Mammary epithelial cell (primary cell): ENCODE measurements at regions of chr6 and their contacts with region 1.

Region 1: DNA sequence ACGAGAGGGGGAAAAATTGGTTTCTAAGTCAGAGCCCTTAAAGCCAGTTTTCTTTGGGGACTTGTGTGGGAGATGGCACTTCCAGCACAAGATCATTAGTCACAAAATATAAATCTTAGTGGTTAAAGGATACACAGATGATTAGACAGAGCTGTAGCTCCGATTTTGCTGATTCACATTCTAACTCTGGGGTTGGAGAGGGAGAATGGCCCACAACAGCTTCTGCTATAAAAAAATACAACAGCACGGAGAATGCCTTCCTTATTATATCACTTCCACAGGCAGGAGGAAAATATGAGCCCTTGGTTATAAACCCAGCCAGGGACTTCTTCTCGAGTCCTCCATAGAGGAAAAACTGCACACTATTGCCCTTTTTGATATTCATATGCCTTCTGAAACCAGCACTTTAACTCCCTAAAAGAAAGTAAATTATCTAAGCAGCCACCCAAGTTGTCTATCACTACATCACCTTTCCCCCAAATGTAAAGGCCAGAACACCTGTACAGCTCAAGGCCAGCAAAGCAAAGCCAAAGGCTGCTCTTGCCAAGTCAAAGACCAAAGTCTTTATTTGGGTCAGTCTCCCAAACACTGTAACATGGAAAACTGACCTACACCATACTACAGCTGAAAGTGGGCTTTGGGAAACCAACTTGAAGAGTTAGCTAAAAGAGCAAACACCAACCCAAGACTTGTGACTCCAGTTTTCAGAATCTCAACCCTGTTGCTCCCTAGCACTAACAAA is 10.4 kb downstream of the MRPL14 start:
- DNase-seq: peak; percentile 74
- H3K4me3 ChIP-seq: no peak overlapping the region
- H3K27ac ChIP-seq: peak overlapping the region; percentile 86
- H3K4me1 ChIP-seq: peaks cover 53% of the 10 kb centered on the region
- H3K27me3 ChIP-seq: no peaks in the 10 kb centered on the region
- CTCF ChIP-seq: no peak

Region 2: GRCh38 chr6:43972913-43973300 is 143.9 kb before region 1 on chr6:
- CTCF ChIA-PET with region 1: no interaction called
- dilution Hi-C with region 1: no loop called
- in situ Hi-C with region 1: no loop called
- intact Hi-C with region 1: no loop called
- DNase-seq: peak; percentile 40
- H3K4me3 ChIP-seq: no peak overlapping the region
- H3K27ac ChIP-seq: no peak overlapping the region
- H3K4me1 ChIP-seq: peaks cover 24% of the 10 kb centered on the region
- H3K27me3 ChIP-seq: no peaks in the 10 kb centered on the region
- CTCF ChIP-seq: no peak

Region 3: DNA sequence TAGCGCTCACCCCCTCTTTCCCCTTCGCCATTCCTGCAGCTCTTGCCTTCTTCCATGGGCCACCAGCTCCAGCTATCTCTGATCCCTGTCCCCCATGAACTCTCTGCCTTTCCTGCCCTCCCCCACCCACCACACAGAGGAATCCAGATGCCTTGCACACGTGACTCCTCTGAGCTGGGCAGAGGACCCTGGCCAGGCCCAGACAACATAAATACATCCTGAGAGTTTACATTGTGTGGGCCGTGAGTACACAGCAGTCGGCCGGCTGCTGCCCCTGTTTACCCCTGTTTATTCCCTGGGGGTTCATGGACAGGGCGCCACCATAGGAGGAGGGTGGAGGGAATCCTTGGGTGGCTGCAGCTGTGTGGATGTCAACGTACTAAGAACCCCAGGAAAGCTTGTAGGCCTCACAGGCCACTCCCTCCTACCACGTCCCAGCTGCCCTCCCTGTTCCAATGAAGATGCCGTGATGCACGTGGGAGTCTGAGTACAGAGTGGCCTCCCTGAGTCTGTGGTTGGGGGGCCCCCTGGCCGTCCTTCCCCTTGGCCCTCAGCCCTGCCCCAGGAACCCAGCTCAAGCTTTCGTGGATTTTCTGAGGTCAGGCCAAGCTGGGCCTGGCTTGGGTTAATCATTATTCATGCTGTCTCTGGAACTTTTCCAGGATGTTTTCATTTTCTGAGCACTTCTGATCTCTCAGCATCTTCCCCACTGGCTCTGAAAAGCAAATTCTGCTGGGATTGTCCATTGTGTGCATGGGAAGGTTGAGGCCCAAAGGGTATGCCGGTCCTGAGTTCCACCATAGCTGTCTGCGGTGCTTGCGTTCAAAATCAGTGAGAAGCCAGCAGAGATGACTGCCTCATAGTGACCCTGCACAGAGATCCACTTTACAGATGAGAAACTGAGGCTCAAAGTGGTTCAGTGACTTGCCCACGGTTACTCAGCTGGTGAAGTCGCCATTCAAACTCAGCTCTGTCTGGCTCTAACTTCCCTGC is 125.9 kb before region 1 on chr6:
- CTCF ChIA-PET with region 1: no interaction called
- dilution Hi-C with region 1: no loop called
- in situ Hi-C with region 1: no loop called
- intact Hi-C with region 1: no loop called
- DNase-seq: no peak
- H3K4me3 ChIP-seq: no peak overlapping the region
- H3K27ac ChIP-seq: no peak overlapping the region
- H3K4me1 ChIP-seq: peaks cover 12% of the 10 kb centered on the region
- H3K27me3 ChIP-seq: no peaks in the 10 kb centered on the region
- CTCF ChIP-seq: no peak

Region 4: DNA sequence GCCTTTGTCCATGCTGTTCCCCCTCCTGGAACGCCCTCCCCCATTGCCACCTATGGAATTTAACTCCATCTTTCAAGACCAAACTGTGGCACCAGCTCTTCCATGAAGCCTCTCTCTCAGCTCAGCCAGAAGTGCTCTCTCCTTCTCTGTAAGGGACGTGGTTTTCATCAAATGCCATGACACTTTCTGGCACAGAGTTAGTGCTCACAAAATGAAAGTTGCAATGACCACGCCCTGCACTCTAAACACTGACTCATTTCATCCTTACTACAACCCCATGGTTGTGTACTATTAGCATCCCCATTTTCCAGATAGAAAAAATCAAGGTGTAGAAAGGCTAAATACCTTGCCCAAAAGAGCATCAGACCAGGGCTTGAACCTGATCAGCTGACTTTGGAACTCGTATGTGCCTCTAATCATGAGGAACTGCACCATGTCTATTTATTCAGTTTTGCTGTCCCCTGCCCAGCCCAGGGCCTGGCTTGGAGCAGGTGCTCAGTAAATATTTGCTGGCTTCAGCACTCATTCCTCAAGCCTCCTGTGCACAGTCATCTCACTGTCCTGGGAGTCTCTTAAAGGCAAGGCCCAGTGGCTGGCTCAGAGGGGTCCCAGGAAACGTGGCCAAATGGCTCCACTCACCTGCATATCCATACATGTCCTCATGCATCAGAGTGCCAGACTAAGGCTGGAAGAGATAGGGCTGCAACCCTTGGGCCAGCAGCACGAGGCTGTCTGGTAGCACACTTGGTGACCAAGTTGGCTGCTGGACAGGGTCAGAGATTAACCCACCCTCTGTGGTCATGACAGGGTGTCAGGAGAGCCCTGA is 67.4 kb before region 1 on chr6:
- CTCF ChIA-PET with region 1: no interaction called
- dilution Hi-C with region 1: loop called (anchors 5 kb)
- in situ Hi-C with region 1: no loop called
- intact Hi-C with region 1: no loop called
- DNase-seq: peak; percentile 70
- H3K4me3 ChIP-seq: no peak overlapping the region
- H3K27ac ChIP-seq: no peak overlapping the region
- H3K4me1 ChIP-seq: peaks cover 67% of the 10 kb centered on the region
- H3K27me3 ChIP-seq: no peaks in the 10 kb centered on the region
- CTCF ChIP-seq: no peak

Region 5: GRCh38 chr6:44127186-44128019 is 10.6 kb after region 1 on chr6 and contains the starts of genes MRPL14 and TMEM63B:
- CTCF ChIA-PET with region 1: no interaction called
- dilution Hi-C with region 1: no loop called
- in situ Hi-C with region 1: no loop called
- intact Hi-C with region 1: loop called (anchors 1 kb)
- DNase-seq: peak; percentile 84
- H3K4me3 ChIP-seq: peak within 1 kb of the TSS; percentile 81 to 89 (median 88)
- H3K27ac ChIP-seq: peak within 1 kb of the TSS; percentile 63
- H3K4me1 ChIP-seq: peaks cover 37% of the 10 kb centered on the region
- H3K27me3 ChIP-seq: no peaks in the 10 kb centered on the region
- CTCF ChIP-seq: no peak
- total RNA-seq, gene MRPL14: 57.2 to 82.0 TPM
- total RNA-seq, gene TMEM63B: 121 to 182 TPM

Region 6: DNA sequence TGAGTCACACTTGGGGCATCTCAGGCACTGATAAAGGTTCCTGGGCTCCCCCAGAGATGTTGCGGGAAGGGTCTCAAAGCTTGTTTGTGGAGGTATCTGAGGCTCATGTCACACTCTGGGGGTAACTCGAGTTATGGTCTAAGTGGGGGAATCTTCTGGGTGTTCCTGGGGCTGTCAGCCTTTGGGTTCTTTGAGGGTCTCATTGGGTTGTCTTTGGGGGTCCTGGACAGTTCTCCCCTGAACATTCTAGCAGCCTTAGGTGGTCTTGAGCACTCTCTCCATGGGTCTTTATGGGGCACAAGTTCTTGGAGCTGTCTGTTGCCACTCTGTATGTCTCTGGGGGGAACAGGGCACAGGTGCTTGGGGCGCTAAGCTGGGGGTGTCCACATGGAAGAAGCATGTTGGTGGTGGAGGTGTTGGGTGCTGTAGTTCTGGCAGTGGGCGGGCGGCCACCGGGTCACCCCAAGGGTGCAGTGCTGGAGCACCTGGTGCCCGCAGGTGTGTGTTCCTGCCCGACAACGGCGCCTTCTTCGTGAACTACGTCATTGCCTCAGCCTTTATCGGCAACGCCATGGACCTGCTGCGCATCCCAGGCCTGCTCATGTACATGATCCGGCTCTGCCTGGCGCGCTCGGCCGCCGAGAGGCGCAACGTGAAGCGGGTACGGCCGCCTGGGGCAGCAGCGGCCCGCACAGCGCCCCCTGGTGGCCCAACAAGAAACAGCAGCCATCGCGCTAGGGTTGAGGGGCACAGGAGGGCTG is 34.7 kb after region 1 on chr6:
- CTCF ChIA-PET with region 1: no interaction called
- dilution Hi-C with region 1: no loop called
- in situ Hi-C with region 1: no loop called
- intact Hi-C with region 1: loop called (anchors 5 kb)
- DNase-seq: peak; percentile 48
- H3K4me3 ChIP-seq: no peak overlapping the region
- H3K27ac ChIP-seq: no peak overlapping the region
- H3K4me1 ChIP-seq: no peaks in the 10 kb centered on the region
- H3K27me3 ChIP-seq: no peaks in the 10 kb centered on the region
- CTCF ChIP-seq: peak; percentile 94 to 99